ENCODE measurements at regions of chr15 and their contacts with region 1.

Region 1: GRCh38 chr15:35444557-35445204 is 101.3 kb downstream of the DPH6 start:
- DNase-seq: no peak
- H3K4me3 Mint-ChIP-seq: no peak overlapping the region
- H3K27ac Mint-ChIP-seq: no peak overlapping the region
- H3K4me1 Mint-ChIP-seq: no peaks in the 10 kb centered on the region
- H3K27me3 Mint-ChIP-seq: no peaks in the 10 kb centered on the region

Region 2: DNA sequence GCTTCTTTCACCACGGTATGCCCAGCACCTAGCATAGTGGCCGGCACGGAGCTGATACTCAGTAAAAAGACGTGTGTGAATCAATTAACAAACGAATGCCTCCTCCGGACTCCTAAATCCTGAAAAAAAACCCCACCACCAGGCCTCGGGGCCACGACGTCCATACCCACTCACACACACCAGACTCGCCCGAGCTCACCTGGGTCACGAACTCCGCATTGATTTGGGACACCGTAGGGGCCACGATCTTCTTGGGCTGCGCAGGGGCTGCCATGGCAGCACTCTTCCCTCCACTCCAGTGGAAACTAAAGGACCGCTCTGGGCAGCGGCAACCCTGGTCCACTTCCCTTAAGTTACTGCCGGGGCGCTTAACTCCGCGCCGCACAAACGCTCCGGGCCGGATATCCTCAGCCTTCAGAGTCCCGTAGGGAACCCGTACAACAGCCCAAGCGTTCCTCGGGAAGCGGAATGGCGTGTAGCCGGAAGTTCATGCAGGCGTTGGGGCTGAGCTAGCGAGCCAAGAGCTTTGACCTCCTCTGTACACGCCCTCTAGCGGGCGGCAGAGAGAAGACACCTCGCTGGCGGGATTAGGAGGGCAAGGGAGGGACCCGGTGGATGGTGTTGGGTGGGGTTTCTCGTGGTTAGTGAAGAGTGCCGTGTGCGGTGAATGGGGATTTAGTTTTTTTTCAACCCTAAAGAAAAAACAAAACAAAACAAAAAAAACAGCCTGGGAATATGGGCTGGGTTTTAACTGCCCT is 475.2 kb before region 1 on chr15 and contains the start of gene AQR:
- CTCF ChIA-PET with region 1: interaction called, 11 read pairs
- POLR2A ChIA-PET with region 1: no interaction called
- intact Hi-C with region 1: no loop called
- DNase-seq: peak; percentile 96
- H3K4me3 Mint-ChIP-seq: peak within 1 kb of the TSS; percentile 100
- H3K27ac Mint-ChIP-seq: peak within 1 kb of the TSS; percentile 95
- H3K4me1 Mint-ChIP-seq: peaks cover 31% of the 10 kb centered on the region
- H3K27me3 Mint-ChIP-seq: no peaks in the 10 kb centered on the region
- total RNA-seq, gene AQR: 30.1 to 33.2 TPM

Region 3: GRCh38 chr15:35289024-35289617 is 155.6 kb before region 1 on chr15:
- CTCF ChIA-PET with region 1: interaction called, 67 read pairs
- POLR2A ChIA-PET with region 1: no interaction called
- intact Hi-C with region 1: loop called (anchors 1 kb)
- DNase-seq: no peak
- H3K4me3 Mint-ChIP-seq: no peak overlapping the region
- H3K27ac Mint-ChIP-seq: no peak overlapping the region
- H3K4me1 Mint-ChIP-seq: no peaks in the 10 kb centered on the region
- H3K27me3 Mint-ChIP-seq: peaks cover 1% of the 10 kb centered on the region

Region 4: GRCh38 chr15:35427091-35427490 is 17.6 kb before region 1 on chr15:
- CTCF ChIA-PET with region 1: interaction called, 15 read pairs
- POLR2A ChIA-PET with region 1: no interaction called
- intact Hi-C with region 1: no loop called
- DNase-seq: no peak
- H3K4me3 Mint-ChIP-seq: no peak overlapping the region
- H3K27ac Mint-ChIP-seq: no peak overlapping the region
- H3K4me1 Mint-ChIP-seq: no peaks in the 10 kb centered on the region
- H3K27me3 Mint-ChIP-seq: no peaks in the 10 kb centered on the region

Region 5: GRCh38 chr15:35466476-35466875 is 21.8 kb after region 1 on chr15:
- CTCF ChIA-PET with region 1: interaction called, 14 read pairs
- POLR2A ChIA-PET with region 1: no interaction called
- intact Hi-C with region 1: no loop called
- DNase-seq: no peak
- H3K4me3 Mint-ChIP-seq: no peak overlapping the region
- H3K27ac Mint-ChIP-seq: no peak overlapping the region
- H3K4me1 Mint-ChIP-seq: no peaks in the 10 kb centered on the region
- H3K27me3 Mint-ChIP-seq: no peaks in the 10 kb centered on the region

Region 6: DNA sequence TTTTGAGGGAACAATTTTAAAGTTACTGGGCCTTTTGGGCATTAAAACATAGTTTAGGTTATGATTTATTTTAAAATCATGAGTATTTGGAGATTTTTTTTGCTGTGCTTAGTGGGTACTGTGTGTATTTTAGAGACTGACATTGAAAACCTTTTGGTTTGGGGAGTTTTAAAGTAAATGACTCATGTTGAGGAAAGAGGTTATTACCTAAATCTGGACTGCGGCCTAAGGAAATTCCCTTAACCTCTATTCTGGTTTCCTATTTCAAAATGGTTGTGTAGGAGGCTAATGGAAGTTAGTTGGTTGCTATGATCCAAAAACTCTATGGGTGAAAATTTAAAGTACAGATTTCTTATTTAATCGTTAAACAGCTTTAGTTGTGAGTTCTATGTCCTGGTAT is 158.6 kb after region 1 on chr15:
- CTCF ChIA-PET with region 1: no interaction called
- POLR2A ChIA-PET with region 1: no interaction called
- intact Hi-C with region 1: no loop called
- DNase-seq: no peak
- H3K4me3 Mint-ChIP-seq: no peak overlapping the region
- H3K27ac Mint-ChIP-seq: no peak overlapping the region
- H3K4me1 Mint-ChIP-seq: no peaks in the 10 kb centered on the region
- H3K27me3 Mint-ChIP-seq: no peaks in the 10 kb centered on the region

Region 7: GRCh38 chr15:36529296-36530011 is 1084.8 kb after region 1 on chr15:
- CTCF ChIA-PET with region 1: no interaction called
- POLR2A ChIA-PET with region 1: no interaction called
- intact Hi-C with region 1: no loop called
- DNase-seq: no peak
- H3K4me3 Mint-ChIP-seq: no peak overlapping the region
- H3K27ac Mint-ChIP-seq: no peak overlapping the region
- H3K4me1 Mint-ChIP-seq: no peaks in the 10 kb centered on the region
- H3K27me3 Mint-ChIP-seq: peaks cover 5% of the 10 kb centered on the region